WTC11 (cell line): ENCODE measurements at regions of chr12 and their contacts with region 1.

Region 1: GRCh38 chr12:52390739-52391617 is 5.5 kb upstream of the KRT84 start:
- DNase-seq: peak; percentile 70
- ATAC-seq: peak; percentile 57
- H3K4me3 Mint-ChIP-seq: no peak overlapping the region
- H3K27ac Mint-ChIP-seq: no peak overlapping the region
- H3K4me1 Mint-ChIP-seq: peaks cover 4% of the 10 kb centered on the region; the same call in 1 of the 2 replicates
- H3K27me3 Mint-ChIP-seq: peaks cover 4% of the 10 kb centered on the region; the same call in 1 of the 2 replicates
- CTCF ChIP-seq: 0 out of 2 replicates have a peak, but pooled peaks have one; percentile 38

Region 2: GRCh38 chr12:52285172-52285745 is 105.7 kb before region 1 on chr12:
- CTCF ChIA-PET with region 1: no interaction called
- POLR2A ChIA-PET with region 1: no interaction called
- DNase-seq: no peak
- ATAC-seq: no peak
- H3K4me3 Mint-ChIP-seq: no peak overlapping the region
- H3K27ac Mint-ChIP-seq: no peak overlapping the region
- H3K4me1 Mint-ChIP-seq: peaks cover 11% of the 10 kb centered on the region
- H3K27me3 Mint-ChIP-seq: no peaks in the 10 kb centered on the region
- CTCF ChIP-seq: no peak

Region 3: GRCh38 chr12:52341066-52341580 is 49.9 kb before region 1 on chr12:
- CTCF ChIA-PET with region 1: no interaction called
- POLR2A ChIA-PET with region 1: no interaction called
- DNase-seq: no peak
- ATAC-seq: no peak
- H3K4me3 Mint-ChIP-seq: no peak overlapping the region
- H3K27ac Mint-ChIP-seq: no peak overlapping the region
- H3K4me1 Mint-ChIP-seq: no peaks in the 10 kb centered on the region
- H3K27me3 Mint-ChIP-seq: no peaks in the 10 kb centered on the region; the same call in 1 of the 2 replicates
- CTCF ChIP-seq: no peak

Region 4: DNA sequence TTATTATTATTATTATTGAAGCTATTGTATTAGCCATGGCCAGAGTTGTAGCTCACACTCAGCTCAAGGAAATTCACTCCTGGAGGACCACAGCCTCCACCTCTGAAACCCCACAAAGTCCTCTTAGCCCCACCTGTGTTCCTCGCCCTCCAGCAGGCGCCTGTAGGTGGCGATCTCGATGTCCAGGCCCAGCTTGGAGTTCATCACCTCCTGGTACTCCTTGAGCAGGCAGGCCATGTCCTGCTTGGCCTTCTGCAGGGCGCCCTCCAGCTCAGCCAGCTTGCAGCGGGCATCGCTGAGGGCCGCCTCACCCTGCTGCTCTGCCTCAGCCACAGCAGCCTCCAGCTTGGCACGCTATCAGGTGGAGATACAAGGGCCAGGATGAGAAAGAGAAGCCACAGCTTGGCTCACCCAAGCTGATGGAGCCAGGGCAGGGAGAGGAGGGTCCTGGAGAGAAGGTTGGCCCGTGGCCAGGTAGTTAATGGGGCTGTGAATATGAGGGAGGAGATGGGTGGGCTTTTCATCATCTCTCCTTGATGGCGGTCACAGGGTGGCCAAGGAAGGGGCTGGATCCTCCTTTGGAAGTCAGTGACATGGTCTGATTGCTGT is 28.8 kb before region 1 on chr12:
- CTCF ChIA-PET with region 1: interaction called, 11 read pairs
- POLR2A ChIA-PET with region 1: no interaction called
- DNase-seq: peak; percentile 57
- ATAC-seq: peak; percentile 26; the same call in 1 of the 2 replicates
- H3K4me3 Mint-ChIP-seq: no peak overlapping the region
- H3K27ac Mint-ChIP-seq: no peak overlapping the region
- H3K4me1 Mint-ChIP-seq: peaks cover 15% of the 10 kb centered on the region; the same call in 1 of the 2 replicates
- H3K27me3 Mint-ChIP-seq: no peaks in the 10 kb centered on the region
- CTCF ChIP-seq: peak; percentile 31; the same call in 1 of the 2 replicates

Region 5: DNA sequence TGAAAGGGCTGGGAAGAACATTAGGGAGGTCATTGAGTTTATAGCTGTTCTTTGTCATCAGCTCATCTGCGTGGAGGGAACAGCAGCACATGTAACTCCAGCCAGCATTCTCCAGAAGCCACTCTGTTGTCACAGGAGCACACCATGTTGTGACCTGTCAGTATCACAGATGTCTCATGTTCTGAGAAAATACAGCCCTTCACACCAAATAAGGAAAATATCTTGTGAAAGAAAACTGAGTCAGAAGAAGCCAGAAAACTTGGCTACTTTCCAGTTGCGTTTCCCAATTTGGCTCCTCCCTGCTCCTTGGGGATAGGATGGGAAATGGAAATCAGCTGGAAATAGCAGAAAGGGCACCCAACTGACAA is 25.4 kb after region 1 on chr12:
- CTCF ChIA-PET with region 1: interaction called, 35 read pairs
- POLR2A ChIA-PET with region 1: no interaction called
- DNase-seq: no peak
- ATAC-seq: no peak
- H3K4me3 Mint-ChIP-seq: no peak overlapping the region
- H3K27ac Mint-ChIP-seq: no peak overlapping the region
- H3K4me1 Mint-ChIP-seq: peaks cover 9% of the 10 kb centered on the region
- H3K27me3 Mint-ChIP-seq: no peaks in the 10 kb centered on the region
- CTCF ChIP-seq: no peak

Region 6: DNA sequence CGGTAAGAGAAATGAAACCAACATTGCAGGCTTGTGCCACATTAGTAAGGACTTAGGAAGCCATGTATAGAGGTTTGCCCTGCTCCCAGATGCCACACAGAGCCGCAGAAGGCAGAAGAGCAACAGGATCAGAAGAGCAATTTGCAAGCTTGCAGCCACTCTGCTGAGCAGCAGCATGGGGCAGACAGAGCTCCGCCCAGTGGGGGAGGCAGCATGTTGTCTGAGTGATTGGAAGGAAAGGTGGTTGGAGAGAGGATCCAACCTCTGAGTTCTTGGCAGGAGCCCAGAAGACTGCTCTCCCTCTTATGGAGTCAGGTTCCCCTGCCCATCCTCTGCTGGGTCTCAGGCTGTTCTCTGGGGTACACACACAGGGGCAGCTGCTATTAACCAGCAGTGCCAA is 104.4 kb after region 1 on chr12:
- CTCF ChIA-PET with region 1: interaction called, 20 read pairs
- POLR2A ChIA-PET with region 1: no interaction called
- DNase-seq: peak; percentile 50
- ATAC-seq: peak; percentile 77
- H3K4me3 Mint-ChIP-seq: no peak overlapping the region
- H3K27ac Mint-ChIP-seq: no peak overlapping the region
- H3K4me1 Mint-ChIP-seq: peaks cover 27% of the 10 kb centered on the region
- H3K27me3 Mint-ChIP-seq: peaks cover 4% of the 10 kb centered on the region; the same call in 1 of the 2 replicates
- CTCF ChIP-seq: no peak

Region 7: DNA sequence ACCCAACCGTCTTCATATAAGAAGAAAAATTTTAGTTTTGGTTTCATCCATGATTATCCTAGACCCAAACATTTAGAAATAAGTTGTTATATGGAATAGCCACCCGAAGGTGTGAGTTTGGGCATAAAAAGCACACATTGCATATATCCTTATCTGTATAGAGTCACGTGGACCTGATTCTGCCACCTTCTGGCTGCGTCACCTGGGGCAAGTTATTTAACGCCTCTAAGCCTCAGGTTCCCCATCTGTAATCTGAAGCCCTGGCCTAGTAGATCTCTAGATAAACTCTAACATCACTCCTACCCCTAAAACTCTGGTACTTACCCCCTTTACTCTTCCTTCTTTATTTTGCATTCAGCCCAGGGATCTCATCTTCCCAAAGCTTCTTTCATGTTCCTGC is 143.5 kb after region 1 on chr12:
- CTCF ChIA-PET with region 1: interaction called, 28 read pairs
- POLR2A ChIA-PET with region 1: no interaction called
- DNase-seq: no peak
- ATAC-seq: peak; percentile 51; the same call in 1 of the 2 replicates
- H3K4me3 Mint-ChIP-seq: no peak overlapping the region
- H3K27ac Mint-ChIP-seq: 0 out of 2 replicates have a peak overlapping the region, but pooled peaks have one; percentile 14
- H3K4me1 Mint-ChIP-seq: no peaks in the 10 kb centered on the region
- H3K27me3 Mint-ChIP-seq: no peaks in the 10 kb centered on the region
- CTCF ChIP-seq: no peak

Region 8: DNA sequence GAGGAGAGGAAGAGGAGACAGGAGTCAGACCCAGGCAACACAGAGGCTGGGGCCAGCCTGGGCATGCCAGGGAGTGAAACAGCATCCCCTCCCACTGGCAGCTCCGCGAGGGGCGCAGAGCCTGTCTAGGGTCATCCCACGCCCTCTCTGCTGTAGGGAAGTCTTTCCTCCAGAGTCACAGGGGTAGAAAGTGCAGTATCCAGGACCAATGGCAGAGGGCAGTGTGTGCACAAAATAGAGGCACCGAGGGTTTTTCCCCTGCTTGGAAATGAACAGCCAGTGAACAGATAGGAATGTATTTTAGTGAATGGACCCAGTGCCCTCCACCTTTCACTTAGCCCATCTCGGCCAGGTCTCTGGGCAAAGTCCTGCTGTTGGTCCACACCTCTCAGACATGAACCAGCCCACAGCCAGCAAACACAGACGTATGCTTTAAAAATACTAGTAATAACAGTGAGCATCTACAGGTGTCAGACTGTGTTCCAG is 192.0 kb after region 1 on chr12:
- CTCF ChIA-PET with region 1: interaction called, 15 read pairs
- POLR2A ChIA-PET with region 1: no interaction called
- DNase-seq: peak; percentile 74
- ATAC-seq: peak; percentile 97
- H3K4me3 Mint-ChIP-seq: no peak overlapping the region; the same call in 1 of the 2 replicates
- H3K27ac Mint-ChIP-seq: no peak overlapping the region
- H3K4me1 Mint-ChIP-seq: peaks cover 6% of the 10 kb centered on the region
- H3K27me3 Mint-ChIP-seq: no peaks in the 10 kb centered on the region
- CTCF ChIP-seq: no peak; the same call in none of the 2 replicates